Pancreas (tissue), 10 donors: ENCODE measurements at regions of chr16 and their contacts with region 1.

Region 1: GRCh38 chr16:74998481-74999218 is at the start of gene ZNRF1:
- DNase-seq: peak; percentile 75 to 95 (median 87)
- ATAC-seq: peak; percentile 84 to 89 (median 86)
- H3K4me3 ChIP-seq: peak within 1 kb of the TSS; percentile 63 to 87 (median 73)
- H3K27ac ChIP-seq: peak within 1 kb of the TSS; percentile 54 to 84 (median 70)
- H3K4me1 ChIP-seq: peaks cover 5 to 16% (median 7%) of the 10 kb centered on the region in 3 donors
- H3K27me3 ChIP-seq: no peaks in the 10 kb centered on the region
- CTCF ChIP-seq: peak; percentile 37 to 62 (median 50)
- total RNA-seq, gene ZNRF1: 5.4 to 11.4 (median 8.1) TPM

Region 2: DNA sequence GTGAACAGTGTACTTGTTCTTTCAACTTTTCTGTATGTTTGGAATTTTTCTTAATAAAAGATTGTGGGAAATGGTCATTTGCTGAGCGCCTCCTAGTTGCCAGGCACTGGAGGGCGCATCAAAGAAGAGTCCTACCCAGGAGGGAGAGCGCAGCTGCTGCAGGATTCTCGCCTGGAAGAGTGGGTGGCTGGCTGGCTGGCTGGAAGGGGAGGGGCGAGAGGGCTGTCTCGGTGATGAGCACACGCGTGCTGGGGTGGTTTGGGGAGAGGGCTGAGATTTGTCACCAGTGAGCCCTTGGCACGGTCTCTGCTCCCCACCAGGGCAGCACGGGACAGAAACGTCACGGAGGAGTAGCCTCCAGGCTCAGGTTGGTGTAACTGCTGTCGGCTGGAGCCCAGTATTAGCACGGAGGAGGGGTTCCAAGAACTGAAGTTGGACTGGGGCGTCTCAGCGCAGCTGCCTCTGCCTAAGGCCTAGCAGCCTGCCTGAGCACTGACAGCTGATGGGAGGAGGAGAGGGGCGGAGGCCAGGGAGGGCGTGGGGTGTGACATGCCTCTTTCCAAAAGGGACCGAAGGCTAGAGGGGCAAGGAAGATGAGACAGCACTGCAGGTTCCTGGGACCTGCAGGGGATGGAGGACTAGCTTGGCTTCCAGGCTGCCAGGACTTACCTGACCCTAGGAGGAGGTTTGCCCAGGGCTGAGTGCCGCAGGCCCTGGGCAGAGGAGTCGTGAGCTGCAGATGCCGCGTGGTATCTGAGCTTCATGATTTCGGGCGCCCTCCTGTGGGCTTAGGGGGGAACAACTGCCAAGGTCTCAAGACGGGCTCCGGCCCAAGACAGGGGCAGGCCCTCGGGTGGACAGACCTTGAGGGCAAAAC is 112.2 kb after region 1 on chr16:
- intact Hi-C with region 1: loop called in 2 of 3 experiments (anchors 5 kb)
- DNase-seq: peak; percentile 80 to 94 (median 89)
- ATAC-seq: peak; percentile 59 to 82 (median 78)
- H3K4me3 ChIP-seq: peak overlapping the region in 1 of 4 donors; percentile 1
- H3K27ac ChIP-seq: peak overlapping the region in 2 of 4 donors; percentile 33 to 67
- H3K4me1 ChIP-seq: peaks cover 19 to 39% (median 37%) of the 10 kb centered on the region in 3 donors
- H3K27me3 ChIP-seq: no peaks in the 10 kb centered on the region
- CTCF ChIP-seq: peak; percentile 78 to 91 (median 83)

Region 3: DNA sequence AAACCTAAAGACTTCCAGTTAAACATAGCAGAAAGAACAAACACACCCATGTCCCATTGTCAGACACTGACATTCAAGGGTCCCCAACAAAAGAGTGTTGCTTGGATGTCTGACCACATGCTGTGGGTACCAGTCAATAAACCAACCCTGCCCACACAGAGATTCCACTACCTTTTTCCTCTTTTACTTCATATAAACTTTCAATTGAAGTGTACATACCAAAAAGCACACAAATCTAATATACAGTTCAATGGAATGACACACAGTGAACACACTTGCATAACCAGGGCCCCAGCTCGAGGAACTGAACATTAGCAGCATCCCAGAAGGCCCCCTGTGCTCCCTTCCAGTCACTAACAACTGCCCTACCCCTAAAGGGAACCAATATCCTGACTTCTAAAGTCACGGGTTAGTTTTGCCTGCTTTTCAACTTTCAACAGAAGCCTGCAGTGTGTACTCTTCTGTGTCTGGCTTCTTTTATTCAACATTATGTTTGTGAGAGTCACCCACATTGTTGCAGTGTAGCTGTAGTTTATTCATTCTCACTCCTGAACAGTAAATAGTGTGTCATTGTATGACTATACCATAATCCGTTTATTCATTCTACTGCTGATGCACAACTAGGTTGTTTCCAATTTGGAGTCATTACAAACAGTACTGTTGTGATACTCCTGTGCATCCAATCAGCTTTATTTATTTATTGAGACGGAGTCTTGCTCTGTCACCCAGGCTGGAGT is 416.7 kb after region 1 on chr16:
- intact Hi-C with region 1: loop called in 1 of 3 experiments (anchors 10 kb)
- DNase-seq: no peak
- ATAC-seq: no peak
- H3K4me3 ChIP-seq: no peak overlapping the region
- H3K27ac ChIP-seq: no peak overlapping the region
- H3K4me1 ChIP-seq: peaks cover 0 to 10% (median 0%) of the 10 kb centered on the region in 3 donors
- H3K27me3 ChIP-seq: no peaks in the 10 kb centered on the region
- CTCF ChIP-seq: no peak